ENCODE measurements at regions of chr5 and their contacts with region 1.

Region 1: GRCh38 chr5:179907570-179908324 is at the start of gene TBC1D9B:
- DNase-seq: peak in 41 of 42 donors; percentile 30 to 84 (median 66)

Region 2: DNA sequence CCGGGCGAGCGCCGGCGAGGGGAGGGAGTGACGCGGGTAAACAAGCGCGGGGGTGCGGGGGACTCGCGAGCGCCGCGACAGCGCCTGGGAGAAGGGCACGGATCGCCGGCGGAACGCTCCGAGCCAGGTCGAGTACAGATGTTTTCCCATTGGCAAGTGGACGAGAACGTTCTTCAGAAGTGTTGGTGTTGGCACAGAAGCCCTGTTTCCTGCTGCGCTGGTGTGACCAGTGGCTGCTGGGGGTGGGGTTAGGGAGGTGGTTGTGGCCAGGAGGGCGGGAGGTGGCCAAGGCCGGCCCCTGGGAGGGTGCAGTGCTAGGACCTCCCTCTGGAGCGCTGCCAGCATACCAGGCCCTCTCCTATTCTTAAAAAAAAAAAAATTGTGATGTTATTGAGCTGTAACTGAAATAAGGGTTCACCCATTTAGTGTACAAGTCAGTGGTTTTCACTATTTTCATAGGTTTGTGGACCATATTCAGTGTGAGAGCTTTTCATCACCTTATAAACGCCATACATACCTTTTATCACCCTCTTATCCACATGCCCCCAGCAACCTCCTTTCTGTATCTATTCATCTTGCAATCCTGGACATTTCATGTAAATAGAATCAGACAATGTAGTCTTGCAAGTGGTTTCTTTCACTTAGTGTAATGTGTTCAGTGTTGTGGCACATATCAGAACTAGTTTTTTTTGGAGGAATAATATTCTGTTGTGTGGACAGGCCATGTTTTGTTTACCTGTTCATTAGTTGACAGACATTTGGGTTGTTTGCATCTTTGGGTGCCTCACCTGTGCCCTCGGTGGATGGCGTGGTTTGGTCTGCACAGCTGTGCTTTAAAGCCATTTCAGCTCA is 85.9 kb before region 1 on chr5:
- intact Hi-C with region 1: no loop called
- DNase-seq: peak; percentile 81 to 96 (median 91)

Region 3: DNA sequence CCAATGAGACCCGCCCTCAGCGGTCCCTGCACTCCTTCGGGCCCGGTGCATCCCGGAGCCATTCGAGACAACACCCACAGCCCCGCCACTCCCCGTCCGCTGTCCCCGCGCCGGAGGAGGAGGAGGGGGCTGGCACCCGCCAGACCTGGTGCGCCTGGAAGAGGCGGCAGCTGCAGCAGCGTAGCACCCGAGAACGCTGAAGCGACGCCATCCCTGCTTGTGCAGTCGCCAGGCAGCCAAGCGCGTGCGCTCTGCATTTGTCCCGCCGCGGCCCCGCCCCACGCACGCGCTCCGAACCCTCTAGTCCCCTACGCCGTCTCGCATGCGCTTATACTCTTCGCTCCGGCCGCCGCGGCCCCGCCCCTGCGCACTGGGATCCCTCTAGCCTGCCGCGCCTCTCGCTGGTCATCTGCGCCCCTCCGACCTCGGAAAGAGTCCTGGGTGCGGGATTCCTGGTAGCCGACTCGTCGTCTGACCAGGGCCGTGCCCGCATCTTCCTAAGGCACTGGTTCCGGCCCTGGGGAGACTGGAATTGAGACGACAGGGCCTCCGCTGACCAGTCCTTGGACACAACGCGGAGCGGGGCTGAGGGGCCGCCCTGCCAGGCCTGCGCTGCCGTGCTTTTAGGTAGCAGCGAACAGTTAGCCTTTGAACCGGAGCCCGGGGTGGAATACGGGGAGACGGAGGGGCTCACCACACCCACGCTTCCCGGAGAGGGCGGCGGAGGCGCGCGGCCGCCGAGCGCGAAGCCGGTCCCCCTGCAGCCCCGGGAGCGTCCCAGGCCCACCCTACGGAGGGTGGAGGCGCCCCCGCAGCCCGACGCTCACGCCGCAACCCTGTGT is 48.9 kb before region 1 on chr5 and contains the start of gene MRNIP:
- intact Hi-C with region 1: loop called (anchors 5 kb)
- DNase-seq: peak; percentile 93 to 99 (median 97)

Region 4: GRCh38 chr5:180071531-180072255 is 163.9 kb after region 1 on chr5 and contains the start of gene RNF130:
- intact Hi-C with region 1: loop called (anchors 5 kb)
- DNase-seq: peak; percentile 79 to 97 (median 92)

Region 5: DNA sequence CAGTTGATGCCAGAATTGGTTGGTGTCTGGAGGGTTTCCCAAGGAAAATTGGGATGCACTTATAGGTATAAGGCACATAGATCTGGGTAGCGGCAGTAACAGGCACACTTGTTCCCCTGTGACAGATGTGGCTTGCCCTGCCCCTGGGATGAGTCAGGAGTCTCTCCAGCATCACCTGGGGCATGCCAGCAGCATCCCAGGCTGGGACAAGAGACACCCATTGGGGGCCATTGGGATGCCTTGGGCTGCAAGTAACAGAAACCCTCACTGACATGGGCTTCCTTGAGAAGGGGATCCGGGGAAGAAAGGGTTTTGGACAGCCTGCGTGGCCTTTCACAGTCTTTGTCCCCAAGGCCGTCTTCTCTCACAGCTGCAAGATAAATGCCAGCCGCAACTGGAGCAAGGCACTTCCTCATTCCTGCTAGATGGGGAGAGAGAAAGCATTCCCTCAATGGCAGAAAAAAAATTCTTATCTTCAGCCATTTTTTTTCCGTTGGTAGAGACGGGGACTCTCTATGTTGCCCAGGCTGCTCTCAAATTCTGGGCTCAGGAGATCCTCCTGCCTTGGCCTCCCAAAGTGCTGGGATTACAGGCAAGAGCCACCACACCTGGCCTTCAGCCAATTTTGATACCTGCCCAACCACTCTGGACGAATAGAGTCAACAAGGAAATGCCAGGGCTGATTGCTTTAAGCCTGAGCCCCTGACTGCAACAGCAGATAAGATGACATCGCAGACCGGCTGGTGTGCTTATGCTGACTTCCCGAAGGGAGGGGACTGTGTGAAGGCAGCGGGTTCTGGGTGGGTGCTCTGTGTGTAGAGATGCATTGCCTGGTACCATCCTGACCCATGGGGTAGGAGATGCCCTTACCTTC is 177.2 kb after region 1 on chr5:
- intact Hi-C with region 1: loop called (anchors 5 kb)
- DNase-seq: peak in 6 of 42 donors; percentile 9 to 45 (median 18)